Cardiac septum (tissue), 1 donor: ENCODE measurements at regions of chr3 and their contacts with region 1.

Region 1: GRCh38 chr3:127628788-127629466 is at the start of gene PODXL2:
- DNase-seq: peak; percentile 77
- total RNA-seq, gene PODXL2: 2.2 TPM

Region 2: GRCh38 chr3:127588806-127589577 is 39.9 kb before region 1 on chr3:
- intact Hi-C with region 1: no loop called
- DNase-seq: no peak

Region 3: GRCh38 chr3:127598841-127599570 is 29.9 kb before region 1 on chr3:
- intact Hi-C with region 1: loop called (anchors 2 kb)
- DNase-seq: no peak

Region 4: DNA sequence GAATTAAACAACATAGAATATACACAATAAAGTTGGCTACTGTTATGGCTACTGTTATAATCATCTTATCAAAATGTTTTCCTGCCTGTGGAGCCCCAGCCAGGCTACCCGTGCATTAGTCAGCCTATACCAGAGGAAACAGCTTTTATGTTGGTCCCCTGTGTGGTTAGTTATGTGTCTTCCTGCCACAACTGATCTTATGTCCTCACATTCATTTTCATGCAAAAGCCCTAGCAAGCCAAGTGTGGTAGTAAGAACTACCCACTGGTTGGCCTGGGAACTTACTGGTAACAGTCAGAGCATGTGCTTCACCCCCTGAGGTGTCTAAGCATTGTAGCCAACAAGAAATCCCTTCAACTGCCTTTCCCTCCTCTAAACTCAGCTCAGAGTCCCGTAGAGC is 171.6 kb after region 1 on chr3:
- intact Hi-C with region 1: no loop called
- DNase-seq: no peak